CD4-positive, alpha-beta T cell (primary cell): ENCODE measurements at regions of chr18 and their contacts with region 1.

Region 1: DNA sequence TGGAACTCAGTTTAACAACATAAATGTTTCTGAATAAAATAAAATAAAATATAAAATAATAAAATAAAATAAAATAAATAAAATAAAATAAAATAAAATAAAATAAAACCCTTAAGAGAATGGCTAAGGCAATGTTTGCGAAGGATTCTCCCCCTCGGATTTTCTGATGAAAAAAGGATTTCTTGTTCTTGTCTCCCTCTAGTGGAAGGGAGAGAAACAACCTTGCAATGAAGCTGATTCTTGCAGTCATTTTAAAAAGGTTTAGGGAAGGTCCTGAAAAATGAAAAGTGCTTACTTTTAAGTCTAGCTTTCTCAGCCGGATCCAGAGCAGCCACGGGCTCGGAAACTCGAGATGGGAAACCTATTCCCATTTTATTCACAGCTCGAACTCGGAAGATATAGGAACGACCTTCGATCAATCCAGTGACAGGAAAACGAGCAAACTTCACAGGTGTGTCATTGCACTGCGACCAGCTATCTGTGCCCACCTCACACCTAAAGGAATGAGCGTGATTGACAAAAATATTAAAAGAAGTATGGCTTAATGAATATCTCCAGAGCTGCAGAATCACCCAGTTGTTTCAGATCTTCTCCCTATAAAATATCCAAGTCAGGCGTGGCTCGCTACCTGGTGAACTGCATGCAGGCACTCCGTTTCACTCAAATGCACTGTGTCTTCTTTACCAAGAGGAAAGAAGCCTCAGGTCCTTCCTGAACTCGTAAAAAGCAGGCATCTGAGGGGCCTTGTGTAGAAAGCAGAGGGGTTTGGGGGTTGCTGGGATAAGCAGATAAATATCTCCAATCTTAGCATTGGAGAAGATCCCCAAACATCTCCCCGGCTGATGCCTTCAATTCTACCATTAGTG is 68.1 kb downstream of the MYOM1 start:
- DNase-seq: peak in 3 of 14 experiments; percentile 49 to 60 (median 58)
- ATAC-seq: no peak
- H3K4me3 ChIP-seq: no peak overlapping the region
- H3K4me3 Mint-ChIP-seq: no peak overlapping the region
- H3K27ac ChIP-seq: no peak overlapping the region
- H3K27ac Mint-ChIP-seq: no peak overlapping the region
- H3K4me1 ChIP-seq: peaks cover 4% of the 10 kb centered on the region
- H3K4me1 Mint-ChIP-seq: peaks cover 3% of the 10 kb centered on the region
- H3K27me3 ChIP-seq: no peaks in the 10 kb centered on the region
- H3K27me3 Mint-ChIP-seq: no peaks in the 10 kb centered on the region
- CTCF ChIP-seq: peak; percentile 95

Region 2: DNA sequence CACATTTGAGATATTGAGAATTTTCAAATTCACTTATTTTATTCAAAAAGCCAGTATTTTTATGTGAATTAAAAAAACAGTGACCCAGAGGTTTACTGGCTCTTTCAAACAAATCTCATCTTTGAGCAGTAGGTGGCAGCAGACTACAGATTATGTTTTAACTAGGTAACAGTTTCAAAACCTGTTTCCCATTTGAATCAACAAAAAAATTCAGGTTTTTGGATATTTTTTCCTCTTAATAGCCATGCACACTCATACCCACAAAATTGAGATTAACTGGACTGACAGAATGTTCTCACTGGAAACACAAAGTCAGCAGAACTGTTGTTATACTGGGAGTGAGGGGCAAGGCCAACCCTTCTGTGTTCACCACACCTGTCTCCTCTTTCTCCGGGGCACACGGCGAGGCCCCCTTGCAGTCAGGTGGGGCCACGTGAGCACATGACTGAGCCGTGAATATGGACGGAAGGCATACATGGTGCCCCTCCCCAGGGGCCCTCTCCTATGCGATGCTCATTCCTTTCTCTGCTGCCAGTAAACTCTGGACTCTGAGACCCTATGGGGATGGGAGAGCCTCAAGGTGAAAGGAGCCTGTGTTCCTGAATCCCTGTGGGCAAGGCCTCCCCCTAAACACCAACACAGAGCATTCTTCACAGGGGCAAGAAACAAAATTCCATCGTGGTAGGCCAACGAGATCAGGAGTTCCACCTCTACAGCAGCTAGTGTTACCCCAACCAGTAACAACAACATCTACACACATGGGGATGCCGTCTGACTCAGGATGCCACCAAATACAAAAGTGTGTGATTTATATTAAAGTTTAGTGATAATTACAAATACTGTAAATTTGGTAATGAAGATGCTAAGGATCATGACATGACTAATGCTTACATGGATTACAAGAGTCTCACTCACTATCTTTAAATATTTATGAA is 219.1 kb before region 1 on chr18:
- CTCF ChIA-PET with region 1: interaction called, 9 read pairs
- POLR2A ChIA-PET with region 1: no interaction called
- intact Hi-C with region 1: loop called (anchors 2 kb)
- DNase-seq: peak in 8 of 14 experiments; percentile 13 to 84 (median 51)
- ATAC-seq: peak; percentile 80
- H3K4me3 ChIP-seq: no peak overlapping the region
- H3K4me3 Mint-ChIP-seq: no peak overlapping the region
- H3K27ac ChIP-seq: peak overlapping the region; percentile 18 to 51
- H3K27ac Mint-ChIP-seq: peak overlapping the region; percentile 67
- H3K4me1 ChIP-seq: peaks cover 9% of the 10 kb centered on the region
- H3K4me1 Mint-ChIP-seq: peaks cover 36% of the 10 kb centered on the region
- H3K27me3 ChIP-seq: no peaks in the 10 kb centered on the region
- H3K27me3 Mint-ChIP-seq: no peaks in the 10 kb centered on the region
- CTCF ChIP-seq: peak; percentile 92